GM13977 (cell line): ENCODE measurements at regions of chr12 and their contacts with region 1.

Region 1: DNA sequence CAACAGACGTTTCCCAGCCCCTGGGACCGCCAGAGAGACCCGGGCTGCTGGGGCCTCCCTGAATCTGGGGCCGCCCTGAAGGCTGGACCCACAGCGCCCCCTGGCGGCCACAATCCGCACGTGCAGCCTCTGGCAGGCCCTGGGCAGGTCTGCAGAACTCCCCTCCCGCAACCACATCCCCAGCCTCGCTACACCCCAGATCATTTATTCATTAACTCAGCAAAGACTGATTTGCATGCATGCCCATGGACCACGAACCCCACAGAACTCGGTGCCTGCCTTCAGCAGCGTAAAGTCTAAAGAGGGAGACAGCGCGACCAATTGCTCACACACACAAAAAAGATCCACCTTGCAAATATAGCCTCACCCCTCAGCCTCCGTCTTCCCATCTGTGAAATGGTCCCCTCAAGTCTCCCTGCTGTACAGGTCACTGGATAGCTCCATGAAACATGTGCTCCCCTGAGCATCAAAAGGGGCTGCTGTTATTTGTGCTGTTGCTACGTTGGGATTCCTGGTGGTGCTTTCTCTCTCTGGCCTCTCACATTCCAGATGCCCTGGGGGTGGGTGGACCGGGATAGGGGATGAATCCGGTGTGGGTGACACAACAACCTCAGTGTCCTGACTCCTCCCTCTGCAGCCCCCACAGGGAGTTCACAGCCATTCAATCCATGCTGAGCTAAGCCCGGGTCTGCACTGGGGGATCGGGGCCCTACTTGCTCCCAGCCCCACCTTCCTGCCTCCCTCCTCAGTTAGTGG is 96.4 kb downstream of the SCARB1 start:
- DNase-seq: peak; percentile 87
- CTCF ChIP-seq: peak; percentile 98

Region 2: GRCh38 chr12:124044809-124045321 is 722.4 kb before region 1 on chr12:
- in situ Hi-C with region 1: loop called (anchors 10 kb)
- DNase-seq: no peak
- CTCF ChIP-seq: no peak

Region 3: DNA sequence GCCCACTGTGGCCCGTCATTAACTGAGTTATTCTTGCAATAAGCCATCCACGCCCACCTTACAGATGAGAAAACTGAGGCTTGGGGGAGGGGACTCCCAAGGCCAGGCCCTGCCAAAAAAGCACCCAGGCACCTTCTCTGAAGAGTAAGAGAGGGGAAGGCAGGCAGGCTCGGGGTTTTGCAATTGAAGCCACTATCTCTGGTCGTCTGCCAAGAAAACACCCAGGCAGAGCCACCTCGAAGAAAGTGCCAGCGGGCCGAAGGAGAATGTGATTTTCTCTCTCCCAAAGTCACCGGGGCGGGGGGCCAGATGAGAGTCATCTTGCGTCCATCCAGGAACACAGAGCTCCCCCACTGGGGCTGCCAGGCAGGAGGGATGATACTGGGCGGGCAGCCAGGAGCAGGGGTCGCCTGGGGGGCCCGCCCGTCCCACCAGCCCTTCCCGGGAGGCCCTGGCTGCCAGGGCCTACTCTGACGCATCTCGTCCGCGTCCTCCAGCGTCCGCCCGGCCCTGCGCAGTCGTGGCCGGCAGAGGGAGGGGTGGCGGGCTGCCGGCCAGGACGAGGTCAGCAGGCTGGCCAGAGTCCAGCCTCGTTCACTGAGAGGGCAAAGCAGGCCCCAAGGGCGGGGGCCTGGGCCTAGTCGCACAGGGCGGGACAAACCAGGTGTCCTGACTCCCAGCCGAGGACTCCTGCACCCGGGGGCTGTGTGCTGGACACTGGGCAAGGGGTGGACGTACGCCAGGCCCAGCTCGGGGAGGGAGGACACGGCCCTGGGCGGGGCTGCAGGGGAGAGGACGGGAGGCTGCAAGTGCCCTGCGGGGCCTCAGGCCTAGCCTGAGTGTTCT is 398.0 kb before region 1 on chr12:
- in situ Hi-C with region 1: loop called (anchors 25 kb)
- DNase-seq: no peak
- CTCF ChIP-seq: no peak